ENCODE measurements at regions of chr12 and their contacts with region 1.

Region 1: GRCh38 chr12:49967042-49967776 is 5.5 kb downstream of the AQP5 start:
- DNase-seq: peak; percentile 91
- ATAC-seq: peak; percentile 91
- H3K4me3 ChIP-seq: peak overlapping the region; percentile 7 to 66 (median 45)
- H3K4me3 Mint-ChIP-seq: peak overlapping the region; percentile 81
- H3K27ac ChIP-seq: no peak overlapping the region
- H3K27ac Mint-ChIP-seq: no peak overlapping the region
- H3K4me1 ChIP-seq: peaks cover 11% of the 10 kb centered on the region in 2 donors
- H3K4me1 Mint-ChIP-seq: peaks cover 7% of the 10 kb centered on the region
- H3K27me3 ChIP-seq: peaks cover 0 to 64% (median 16%) of the 10 kb centered on the region in 4 experiments
- H3K27me3 Mint-ChIP-seq: peaks cover 43% of the 10 kb centered on the region
- CTCF ChIP-seq: peak; percentile 91

Region 2: GRCh38 chr12:49945394-49946080 is 21.7 kb before region 1 on chr12:
- CTCF ChIA-PET with region 1: interaction called, 21 read pairs
- POLR2A ChIA-PET with region 1: no interaction called
- intact Hi-C with region 1: no loop called
- DNase-seq: peak; percentile 80
- ATAC-seq: peak; percentile 90
- H3K4me3 ChIP-seq: peak overlapping the region in 4 of 5 experiments; percentile 18 to 48 (median 40)
- H3K4me3 Mint-ChIP-seq: peak overlapping the region; percentile 83
- H3K27ac ChIP-seq: no peak overlapping the region
- H3K27ac Mint-ChIP-seq: no peak overlapping the region
- H3K4me1 ChIP-seq: peaks cover 0 to 8% of the 10 kb centered on the region in 2 donors
- H3K4me1 Mint-ChIP-seq: peaks cover 15% of the 10 kb centered on the region
- H3K27me3 ChIP-seq: peaks cover 0 to 9% (median 4%) of the 10 kb centered on the region in 4 experiments
- H3K27me3 Mint-ChIP-seq: peaks cover 9% of the 10 kb centered on the region
- CTCF ChIP-seq: peak; percentile 89

Region 3: DNA sequence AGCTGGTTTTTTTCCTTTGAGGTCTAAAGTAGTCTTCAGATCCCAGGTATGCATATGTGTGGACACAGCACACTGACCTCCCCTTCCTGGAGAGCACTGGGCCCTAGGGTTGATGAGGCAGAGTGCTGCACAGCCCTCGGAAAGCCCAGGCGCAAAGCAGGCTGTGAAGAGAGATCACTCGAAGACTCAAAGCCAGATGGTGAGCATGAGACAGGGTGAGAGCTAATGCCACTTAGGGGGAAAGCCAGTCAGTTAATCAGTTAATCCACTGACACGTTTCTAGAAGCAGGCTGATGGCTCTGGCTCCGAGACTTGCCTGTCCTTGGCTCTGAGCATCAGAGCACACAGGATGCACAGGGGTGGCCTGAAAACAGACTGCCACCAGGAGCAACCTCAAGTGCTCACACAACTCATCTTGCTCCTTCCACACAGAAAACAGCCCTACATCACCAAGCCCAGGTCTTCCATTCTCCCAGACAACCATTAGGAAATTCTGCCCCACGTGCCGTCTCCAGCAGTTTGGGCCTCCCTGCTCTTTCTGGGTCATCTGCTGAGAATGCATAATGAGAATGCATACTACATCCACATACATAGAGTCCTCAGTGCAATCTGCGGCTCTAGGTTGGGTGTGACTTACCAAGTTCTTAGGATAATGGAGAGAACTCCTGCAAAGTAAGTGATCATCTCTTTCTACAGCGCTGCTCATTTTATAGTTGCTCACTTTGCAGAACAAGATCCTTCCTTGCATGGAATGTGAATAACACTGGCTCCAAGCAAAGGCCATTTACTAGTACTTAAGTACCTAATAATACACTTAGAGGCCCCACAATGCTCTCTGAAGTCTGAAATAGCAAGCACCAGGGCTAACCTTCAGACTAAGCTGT is 17.5 kb after region 1 on chr12:
- CTCF ChIA-PET with region 1: interaction called, 28 read pairs
- POLR2A ChIA-PET with region 1: no interaction called
- intact Hi-C with region 1: no loop called
- DNase-seq: no peak
- ATAC-seq: no peak
- H3K4me3 ChIP-seq: no peak overlapping the region
- H3K4me3 Mint-ChIP-seq: no peak overlapping the region
- H3K27ac ChIP-seq: no peak overlapping the region
- H3K27ac Mint-ChIP-seq: no peak overlapping the region
- H3K4me1 ChIP-seq: no peaks in the 10 kb centered on the region
- H3K4me1 Mint-ChIP-seq: no peaks in the 10 kb centered on the region
- H3K27me3 ChIP-seq: no peaks in the 10 kb centered on the region
- H3K27me3 Mint-ChIP-seq: no peaks in the 10 kb centered on the region
- CTCF ChIP-seq: no peak

Region 4: GRCh38 chr12:50038336-50038735 is 71.1 kb after region 1 on chr12:
- CTCF ChIA-PET with region 1: interaction called, 18 read pairs
- POLR2A ChIA-PET with region 1: no interaction called
- intact Hi-C with region 1: no loop called
- DNase-seq: no peak
- ATAC-seq: no peak
- H3K4me3 ChIP-seq: no peak overlapping the region
- H3K4me3 Mint-ChIP-seq: no peak overlapping the region
- H3K27ac ChIP-seq: no peak overlapping the region
- H3K27ac Mint-ChIP-seq: no peak overlapping the region
- H3K4me1 ChIP-seq: peaks cover 7% of the 10 kb centered on the region in 2 donors
- H3K4me1 Mint-ChIP-seq: peaks cover 2% of the 10 kb centered on the region
- H3K27me3 ChIP-seq: peaks cover 0 to 3% (median 0%) of the 10 kb centered on the region in 4 experiments
- H3K27me3 Mint-ChIP-seq: peaks cover 10% of the 10 kb centered on the region
- CTCF ChIP-seq: no peak

Region 5: GRCh38 chr12:50055831-50056638 is 88.8 kb after region 1 on chr12:
- CTCF ChIA-PET with region 1: interaction called, 90 read pairs
- POLR2A ChIA-PET with region 1: no interaction called
- intact Hi-C with region 1: no loop called
- DNase-seq: peak; percentile 79
- ATAC-seq: peak; percentile 79
- H3K4me3 ChIP-seq: peak overlapping the region in 2 of 5 experiments; percentile 13 to 21
- H3K4me3 Mint-ChIP-seq: peak overlapping the region; percentile 92
- H3K27ac ChIP-seq: no peak overlapping the region
- H3K27ac Mint-ChIP-seq: peak overlapping the region; percentile 34
- H3K4me1 ChIP-seq: peaks cover 22 to 23% of the 10 kb centered on the region in 2 donors
- H3K4me1 Mint-ChIP-seq: peaks cover 21% of the 10 kb centered on the region
- H3K27me3 ChIP-seq: peaks cover 0 to 60% (median 27%) of the 10 kb centered on the region in 4 experiments
- H3K27me3 Mint-ChIP-seq: peaks cover 67% of the 10 kb centered on the region
- CTCF ChIP-seq: peak; percentile 97

Region 6: DNA sequence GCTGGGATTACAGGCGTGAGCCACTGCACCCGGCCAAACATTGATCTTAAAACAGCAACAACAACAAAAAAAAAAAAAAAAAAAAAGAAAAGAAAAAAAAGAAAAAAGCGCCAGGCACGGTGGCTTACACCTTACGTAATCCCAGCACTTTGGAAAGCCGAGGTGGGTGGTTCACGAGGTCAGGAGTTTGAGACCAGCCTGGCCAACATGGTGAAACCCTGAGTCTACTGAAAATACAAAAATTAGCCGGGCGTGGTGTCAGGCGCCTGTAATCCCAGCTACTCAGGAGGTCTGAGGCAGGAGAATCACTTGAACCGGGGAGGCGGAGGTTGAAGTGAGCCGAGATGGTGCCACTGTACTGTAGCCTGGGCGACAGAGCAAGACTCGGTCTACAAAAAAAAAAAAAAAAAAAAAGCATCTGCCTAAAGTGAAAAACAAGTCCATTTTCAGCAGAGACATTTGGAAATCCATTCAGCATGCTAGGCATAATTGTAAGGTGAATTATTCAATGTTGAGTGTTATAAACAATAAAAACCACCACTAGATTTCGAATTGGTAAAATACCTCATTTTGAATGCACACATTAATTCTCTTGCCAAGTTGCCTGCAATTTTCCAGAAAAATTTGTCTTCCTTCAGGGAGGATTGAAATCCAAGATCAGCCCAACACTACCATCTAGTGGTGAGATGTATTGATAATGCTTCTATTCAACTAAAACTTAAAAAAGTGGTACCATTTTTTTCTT is 207.9 kb after region 1 on chr12:
- CTCF ChIA-PET with region 1: interaction called, 12 read pairs
- POLR2A ChIA-PET with region 1: no interaction called
- intact Hi-C with region 1: loop called (anchors 2 kb)
- DNase-seq: peak; percentile 73
- ATAC-seq: no peak
- H3K4me3 ChIP-seq: no peak overlapping the region
- H3K4me3 Mint-ChIP-seq: no peak overlapping the region
- H3K27ac ChIP-seq: no peak overlapping the region
- H3K27ac Mint-ChIP-seq: no peak overlapping the region
- H3K4me1 ChIP-seq: no peaks in the 10 kb centered on the region
- H3K4me1 Mint-ChIP-seq: no peaks in the 10 kb centered on the region
- H3K27me3 ChIP-seq: no peaks in the 10 kb centered on the region
- H3K27me3 Mint-ChIP-seq: no peaks in the 10 kb centered on the region
- CTCF ChIP-seq: peak; percentile 93